ENCODE measurements at regions of chr7 and their contacts with region 1.

Region 1: GRCh38 chr7:14691597-14692203 is 210.9 kb downstream of the DGKB start:
- H3K4me3 ChIP-seq: no peak overlapping the region
- H3K27ac ChIP-seq: no peak overlapping the region
- H3K4me1 ChIP-seq: no peaks in the 10 kb centered on the region
- CTCF ChIP-seq: no peak

Region 2: GRCh38 chr7:13279854-13280435 is 1411.8 kb before region 1 on chr7:
- CTCF ChIA-PET with region 1: interaction called, 98 read pairs
- POLR2A ChIA-PET with region 1: no interaction called
- H3K4me3 ChIP-seq: no peak overlapping the region
- H3K27ac ChIP-seq: no peak overlapping the region
- H3K4me1 ChIP-seq: no peaks in the 10 kb centered on the region
- CTCF ChIP-seq: no peak

Region 3: GRCh38 chr7:13524076-13524475 is 1167.6 kb before region 1 on chr7:
- CTCF ChIA-PET with region 1: interaction called, 12 read pairs
- POLR2A ChIA-PET with region 1: no interaction called
- H3K4me3 ChIP-seq: no peak overlapping the region
- H3K27ac ChIP-seq: no peak overlapping the region
- H3K4me1 ChIP-seq: peaks cover 5% of the 10 kb centered on the region
- CTCF ChIP-seq: no peak

Region 4: GRCh38 chr7:14630048-14630447 is 61.7 kb before region 1 on chr7:
- CTCF ChIA-PET with region 1: no interaction called
- POLR2A ChIA-PET with region 1: no interaction called
- H3K4me3 ChIP-seq: no peak overlapping the region
- H3K27ac ChIP-seq: no peak overlapping the region
- H3K4me1 ChIP-seq: no peaks in the 10 kb centered on the region
- CTCF ChIP-seq: no peak

Region 5: DNA sequence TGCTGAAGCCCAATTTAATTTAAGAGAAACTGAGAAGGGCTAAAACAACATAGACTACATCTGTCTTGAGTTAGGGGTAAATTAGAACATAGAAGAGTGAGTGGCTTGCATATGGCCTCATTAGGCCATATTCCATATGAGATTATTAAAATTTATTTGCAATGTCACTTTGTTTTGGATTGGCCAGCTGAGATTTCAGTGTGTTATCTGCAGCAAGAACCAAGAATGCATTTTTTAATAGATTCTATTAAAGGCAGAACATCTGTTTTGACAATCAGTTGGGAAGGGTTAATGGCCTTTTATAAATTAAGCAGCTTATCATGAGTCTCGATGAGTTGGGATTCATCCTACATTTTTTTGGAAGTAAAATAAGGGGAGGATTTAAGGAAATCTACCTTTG is 25.4 kb before region 1 on chr7:
- CTCF ChIA-PET with region 1: interaction called, 11 read pairs
- POLR2A ChIA-PET with region 1: no interaction called
- H3K4me3 ChIP-seq: no peak overlapping the region
- H3K27ac ChIP-seq: no peak overlapping the region
- H3K4me1 ChIP-seq: no peaks in the 10 kb centered on the region
- CTCF ChIP-seq: no peak

Region 6: DNA sequence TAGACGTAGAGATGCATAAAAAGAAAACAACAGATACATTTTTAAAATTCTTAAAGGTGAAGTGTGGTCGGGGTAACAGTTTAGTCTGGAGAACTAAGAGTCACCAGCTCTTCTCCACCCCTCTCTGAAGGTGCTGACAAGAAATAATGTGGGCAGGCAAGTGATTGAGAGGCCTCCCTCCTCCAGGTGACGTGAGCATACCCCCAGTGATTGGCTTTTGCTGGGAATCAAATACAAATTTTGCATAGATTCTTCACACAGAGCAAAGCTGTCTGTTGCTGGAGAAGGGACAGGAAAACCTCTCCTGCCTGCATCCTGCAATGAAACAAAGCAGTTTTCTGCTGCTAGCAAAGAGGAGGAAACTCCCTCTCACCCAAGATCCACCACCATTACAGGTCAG is 95.9 kb after region 1 on chr7:
- CTCF ChIA-PET with region 1: no interaction called
- POLR2A ChIA-PET with region 1: no interaction called
- H3K4me3 ChIP-seq: no peak overlapping the region
- H3K27ac ChIP-seq: no peak overlapping the region
- H3K4me1 ChIP-seq: no peaks in the 10 kb centered on the region
- CTCF ChIP-seq: no peak

Region 7: DNA sequence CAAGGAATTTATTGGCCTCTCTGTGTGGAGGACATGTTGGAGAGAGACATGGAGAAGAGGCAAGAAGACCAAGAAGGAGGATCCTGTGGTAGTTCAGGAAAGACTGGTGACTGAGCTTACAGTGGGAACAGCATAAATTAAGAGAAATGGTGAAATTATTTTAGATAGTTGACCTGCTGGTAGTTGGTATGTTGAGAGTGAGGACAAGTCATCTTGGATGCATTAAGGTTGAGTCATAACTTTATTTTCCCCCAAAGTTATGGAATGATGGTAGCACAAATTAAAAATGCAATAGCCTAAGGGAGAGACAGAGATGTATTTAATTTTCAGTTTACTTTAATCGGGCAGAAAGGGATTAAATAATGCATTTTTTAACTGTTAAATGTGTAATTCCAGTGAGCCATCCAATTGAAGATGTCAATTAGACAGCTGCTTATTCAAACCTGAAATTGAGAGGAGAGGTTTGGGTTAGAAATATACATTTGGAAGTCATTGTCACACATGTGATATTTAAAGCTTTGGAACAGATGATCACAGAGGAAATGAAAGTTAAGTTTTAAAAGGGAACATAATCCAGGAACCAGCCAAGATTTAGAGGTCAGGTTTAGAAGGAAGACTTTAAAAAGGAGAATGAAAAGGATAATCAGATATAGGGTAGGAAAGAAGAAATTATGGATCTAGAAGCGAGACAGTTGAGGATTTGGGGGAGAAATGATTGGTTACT is 130.2 kb after region 1 on chr7:
- CTCF ChIA-PET with region 1: no interaction called
- POLR2A ChIA-PET with region 1: no interaction called
- H3K4me3 ChIP-seq: no peak overlapping the region
- H3K27ac ChIP-seq: no peak overlapping the region
- H3K4me1 ChIP-seq: no peaks in the 10 kb centered on the region
- CTCF ChIP-seq: no peak

Region 8: DNA sequence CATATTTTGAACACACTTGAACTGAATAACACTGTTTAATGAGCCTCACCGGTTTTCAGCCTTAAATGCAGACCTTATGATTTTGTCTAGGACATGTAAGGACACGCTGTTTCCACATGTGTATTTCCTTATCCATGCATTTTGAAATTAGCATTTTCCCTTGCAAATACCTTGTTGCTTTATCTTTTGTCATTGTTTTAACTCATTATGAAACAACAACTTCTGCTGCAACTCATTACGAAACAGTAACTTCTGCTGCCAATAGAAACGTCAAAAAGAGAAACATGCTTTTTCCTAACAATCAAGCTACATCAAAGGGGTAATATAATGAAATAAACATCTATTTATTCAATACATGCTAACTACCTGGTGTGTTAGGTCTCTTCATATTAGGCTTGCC is 548.1 kb after region 1 on chr7:
- CTCF ChIA-PET with region 1: no interaction called
- POLR2A ChIA-PET with region 1: no interaction called
- H3K4me3 ChIP-seq: no peak overlapping the region
- H3K27ac ChIP-seq: no peak overlapping the region
- H3K4me1 ChIP-seq: no peaks in the 10 kb centered on the region
- CTCF ChIP-seq: no peak